ENCODE measurements at regions of chr1 and their contacts with region 1.

Region 1: GRCh38 chr1:236489710-236490377 is 33.9 kb upstream of the LGALS8 start:
- DNase-seq: no peak
- ATAC-seq: peak; percentile 65
- H3K4me3 ChIP-seq: no peak overlapping the region
- H3K27ac ChIP-seq: no peak overlapping the region
- H3K4me1 ChIP-seq: no peaks in the 10 kb centered on the region
- H3K27me3 ChIP-seq: no peaks in the 10 kb centered on the region

Region 2: DNA sequence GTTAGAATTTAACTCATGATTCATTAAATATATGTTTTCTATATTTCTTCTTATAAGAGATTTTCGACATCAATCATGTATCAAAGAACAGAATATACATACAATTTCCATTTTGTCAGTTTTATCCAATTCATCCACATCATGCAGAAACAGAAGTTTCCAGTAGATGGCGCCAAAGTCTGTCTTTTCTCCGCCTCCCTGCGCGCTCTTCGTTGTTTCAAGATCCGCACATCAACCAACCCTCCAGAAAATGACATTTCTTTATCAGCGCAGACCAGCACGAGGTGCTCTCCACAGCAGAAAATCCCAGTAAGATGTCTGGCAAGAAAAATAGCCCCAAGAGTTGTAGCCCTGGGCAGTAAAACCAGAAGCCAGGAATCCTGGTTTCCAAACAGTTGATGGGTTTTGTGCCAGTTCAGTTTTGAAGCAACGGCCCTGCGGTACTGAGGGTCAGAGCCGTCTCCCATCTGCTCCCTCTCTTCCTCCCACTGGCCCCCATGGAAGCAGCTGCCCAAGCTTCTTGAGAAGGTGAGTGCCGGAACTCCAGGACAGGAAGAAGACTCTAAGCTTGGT is 386.1 kb before region 1 on chr1:
- intact Hi-C with region 1: loop called in 1 of 2 experiments (anchors 5 kb)
- DNase-seq: peak; percentile 47 to 48
- ATAC-seq: peak; percentile 73
- H3K4me3 ChIP-seq: no peak overlapping the region
- H3K27ac ChIP-seq: no peak overlapping the region
- H3K4me1 ChIP-seq: no peaks in the 10 kb centered on the region
- H3K27me3 ChIP-seq: no peaks in the 10 kb centered on the region

Region 3: GRCh38 chr1:236113324-236114032 is 376.4 kb before region 1 on chr1:
- intact Hi-C with region 1: loop called in 1 of 2 experiments (anchors 5 kb)
- DNase-seq: peak in 1 of 2 donors; percentile 66
- ATAC-seq: no peak
- H3K4me3 ChIP-seq: no peak overlapping the region
- H3K27ac ChIP-seq: no peak overlapping the region
- H3K4me1 ChIP-seq: no peaks in the 10 kb centered on the region
- H3K27me3 ChIP-seq: no peaks in the 10 kb centered on the region